Tibial artery (tissue), 4 donors: ENCODE measurements at regions of chr14 and their contacts with region 1.

Region 1: DNA sequence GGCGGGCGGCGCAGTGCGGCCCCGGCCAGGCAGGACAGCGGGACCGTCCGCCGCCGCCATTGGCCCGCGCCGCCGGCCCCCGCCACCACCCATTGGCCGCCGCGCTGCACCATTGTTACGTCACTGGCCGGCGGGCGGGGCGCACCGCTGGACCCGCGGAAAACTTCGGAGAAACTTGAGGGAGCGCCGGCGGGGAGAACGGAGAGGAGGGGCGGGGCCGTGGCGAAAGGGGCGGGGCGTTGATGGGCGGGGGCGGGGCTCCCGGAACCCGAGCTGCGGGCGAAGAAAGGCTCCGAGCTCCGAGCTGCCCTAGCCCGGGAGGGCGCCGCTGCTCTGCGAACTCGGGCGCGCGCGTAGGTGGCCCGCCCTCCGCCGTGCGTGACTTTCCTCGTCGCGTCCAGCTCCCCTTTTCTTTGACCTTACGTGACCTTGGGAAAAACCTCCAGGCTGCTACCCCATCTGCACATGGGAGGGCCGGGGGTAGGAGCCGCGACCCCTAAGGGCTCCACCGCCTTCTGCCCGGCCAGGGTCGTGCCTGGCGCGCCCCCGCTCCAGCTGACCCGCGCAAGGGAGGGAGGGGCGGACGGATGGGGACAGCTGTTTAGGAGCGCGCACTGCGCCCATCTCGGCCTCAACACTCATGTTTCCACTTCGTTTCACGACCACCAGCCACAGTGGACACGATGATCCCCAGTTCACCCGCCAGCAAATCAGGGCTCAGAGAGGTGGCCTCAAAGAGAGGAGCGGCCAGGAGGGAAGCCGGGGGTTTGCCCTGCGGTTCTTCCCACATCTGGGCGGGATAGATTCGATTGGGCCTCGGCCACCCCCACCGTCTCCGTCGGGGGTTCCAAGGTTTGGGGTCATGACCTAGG is at the start of gene ANKRD9:
- DNase-seq: peak; percentile 93 to 97
- H3K4me3 ChIP-seq: peak within 1 kb of the TSS; percentile 61 to 80
- H3K27ac ChIP-seq: peak within 1 kb of the TSS; percentile 74 to 78
- H3K4me1 ChIP-seq: peaks cover 0 to 18% (median 10%) of the 10 kb centered on the region in 4 donors
- H3K27me3 ChIP-seq: no peaks in the 10 kb centered on the region
- CTCF ChIP-seq: no peak

Region 2: GRCh38 chr14:102164241-102164641 is 345.7 kb before region 1 on chr14:
- intact Hi-C with region 1: no loop called
- DNase-seq: peak in 1 of 2 donors; percentile 25
- H3K4me3 ChIP-seq: no peak overlapping the region
- H3K27ac ChIP-seq: no peak overlapping the region
- H3K4me1 ChIP-seq: peaks cover 0 to 10% (median 3%) of the 10 kb centered on the region in 4 donors
- H3K27me3 ChIP-seq: no peaks in the 10 kb centered on the region
- CTCF ChIP-seq: no peak

Region 3: DNA sequence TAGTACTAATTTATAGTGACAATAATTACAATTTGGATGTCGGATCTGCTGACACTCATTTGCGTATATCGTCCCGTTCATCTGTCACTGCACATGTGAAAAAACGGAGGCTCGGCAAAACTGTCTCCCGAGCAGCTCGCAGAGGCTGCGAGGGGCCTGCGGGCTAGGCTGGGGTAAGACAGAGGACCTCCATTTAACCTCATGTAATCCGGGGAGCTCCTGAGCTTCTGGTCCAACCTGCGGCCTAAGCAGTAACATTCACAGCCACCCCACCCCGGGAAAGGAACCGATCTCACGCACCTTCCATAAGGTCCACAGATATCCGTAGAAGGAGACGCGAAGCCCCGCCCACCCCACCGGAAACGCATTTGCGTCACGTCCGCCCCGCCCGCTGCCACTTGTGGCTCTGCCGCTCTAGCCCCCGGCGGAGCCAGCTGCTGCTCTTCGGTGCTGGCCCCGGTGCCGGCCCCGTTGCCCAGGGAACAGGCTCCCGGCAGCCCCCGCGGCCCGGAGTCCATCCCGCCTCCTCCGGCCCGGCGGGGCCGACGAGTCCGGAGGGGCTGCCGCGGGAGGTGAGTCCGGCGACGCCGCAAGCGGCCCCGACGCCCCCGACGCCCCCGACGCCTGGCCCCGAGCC is 147.3 kb before region 1 on chr14 and contains the starts of genes CINP and TECPR2:
- intact Hi-C with region 1: loop called (anchors 5 kb)
- DNase-seq: peak; percentile 98 to 99
- H3K4me3 ChIP-seq: peak within 1 kb of the TSS; percentile 91 to 97
- H3K27ac ChIP-seq: peak within 1 kb of the TSS; percentile 95
- H3K4me1 ChIP-seq: peaks cover 0 to 27% (median 21%) of the 10 kb centered on the region in 4 donors
- H3K27me3 ChIP-seq: no peaks in the 10 kb centered on the region
- CTCF ChIP-seq: no peak

Region 4: GRCh38 chr14:102811251-102811881 is 301.4 kb after region 1 on chr14:
- intact Hi-C with region 1: no loop called
- DNase-seq: peak in 1 of 2 donors; percentile 11
- H3K4me3 ChIP-seq: no peak overlapping the region
- H3K27ac ChIP-seq: no peak overlapping the region
- H3K4me1 ChIP-seq: no peaks in the 10 kb centered on the region
- H3K27me3 ChIP-seq: no peaks in the 10 kb centered on the region
- CTCF ChIP-seq: no peak